SK-N-SH (cell line): ENCODE measurements at regions of chr16 and their contacts with region 1.

Region 1: DNA sequence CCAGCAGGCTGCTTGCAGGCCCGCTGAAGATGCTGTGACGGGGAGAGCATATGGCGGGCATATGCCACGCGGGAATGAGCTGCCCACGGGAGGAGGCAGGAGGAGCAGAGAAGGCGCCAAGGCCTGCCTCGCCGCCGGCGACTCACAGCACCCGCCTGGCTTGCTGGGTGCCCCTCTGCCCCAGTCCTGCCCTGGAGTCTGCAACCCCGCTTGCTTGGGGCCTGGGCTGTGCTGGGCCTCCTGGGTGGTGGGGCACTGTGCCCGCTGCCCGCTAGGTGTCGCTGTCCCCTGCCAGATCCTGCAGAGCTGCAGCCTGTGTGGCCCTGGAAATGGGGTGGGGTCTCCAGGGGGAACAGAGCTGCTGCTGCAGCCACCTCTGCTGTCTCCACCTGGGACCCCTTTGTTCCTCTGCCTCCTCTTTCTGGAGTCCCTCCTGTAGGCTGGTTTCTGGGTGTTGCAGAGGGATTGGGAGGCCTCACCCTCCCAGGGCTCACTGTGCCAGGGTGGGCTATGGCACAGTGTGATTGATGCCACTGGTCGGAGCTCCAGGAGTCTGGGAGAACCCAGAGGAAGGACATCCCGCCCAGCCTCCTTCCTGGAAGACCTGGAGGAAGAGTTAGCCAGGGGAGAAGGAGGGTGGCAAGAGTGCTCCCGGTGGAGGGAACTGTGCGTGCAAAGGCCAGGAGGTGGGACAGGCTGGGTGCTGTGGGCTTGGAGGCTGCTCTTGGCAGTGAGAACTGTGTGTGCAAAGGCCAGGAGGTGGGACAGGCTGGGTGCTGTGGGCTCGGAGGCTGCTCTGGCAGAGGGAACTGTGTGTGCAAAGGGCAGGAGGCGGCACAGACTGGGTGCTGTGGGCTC is 141.0 kb upstream of the CIBAR2 start:
- DNase-seq: peak; percentile 93
- H3K4me3 ChIP-seq: no peak overlapping the region; a peak in 1 of 4 replicates
- H3K27ac ChIP-seq: peak overlapping the region in 1 of 2 experiments; percentile 60; a peak in 2 of 4 replicates
- H3K4me1 ChIP-seq: peaks cover 0 to 55% of the 10 kb centered on the region in 2 experiments; a peak in 1 of 4 replicates
- H3K27me3 ChIP-seq: no peaks in the 10 kb centered on the region
- CTCF ChIP-seq: peak; percentile 94
- EP300 ChIP-seq: no peak
- RAD21 ChIP-seq: peak; percentile 77

Region 2: GRCh38 chr16:85151603-85152413 is 101.5 kb before region 1 on chr16:
- CTCF ChIA-PET with region 1: interaction called, 10 read pairs
- POLR2A ChIA-PET with region 1: no interaction called
- DNase-seq: peak; percentile 93
- H3K4me3 ChIP-seq: no peak overlapping the region
- H3K27ac ChIP-seq: peak overlapping the region; percentile 57 to 89
- H3K4me1 ChIP-seq: peaks cover 6 to 54% of the 10 kb centered on the region in 2 experiments
- H3K27me3 ChIP-seq: no peaks in the 10 kb centered on the region
- CTCF ChIP-seq: no peak
- EP300 ChIP-seq: peak; percentile 56 to 83; a peak in 3 of 4 replicates
- RAD21 ChIP-seq: peak; percentile 25; the same call in 1 of the 2 replicates

Region 3: GRCh38 chr16:85202631-85203461 is 50.5 kb before region 1 on chr16:
- CTCF ChIA-PET with region 1: interaction called, 13 read pairs
- POLR2A ChIA-PET with region 1: no interaction called
- DNase-seq: peak; percentile 95
- H3K4me3 ChIP-seq: no peak overlapping the region
- H3K27ac ChIP-seq: peak overlapping the region; percentile 60 to 95; a peak in 3 of 4 replicates
- H3K4me1 ChIP-seq: peaks cover 14 to 62% of the 10 kb centered on the region in 2 experiments; a peak in 3 of 4 replicates
- H3K27me3 ChIP-seq: no peaks in the 10 kb centered on the region
- CTCF ChIP-seq: no peak
- EP300 ChIP-seq: peak in 1 of 2 experiments; percentile 73; a peak in 3 of 4 replicates
- RAD21 ChIP-seq: peak; percentile 8; the same call in 1 of the 2 replicates

Region 4: DNA sequence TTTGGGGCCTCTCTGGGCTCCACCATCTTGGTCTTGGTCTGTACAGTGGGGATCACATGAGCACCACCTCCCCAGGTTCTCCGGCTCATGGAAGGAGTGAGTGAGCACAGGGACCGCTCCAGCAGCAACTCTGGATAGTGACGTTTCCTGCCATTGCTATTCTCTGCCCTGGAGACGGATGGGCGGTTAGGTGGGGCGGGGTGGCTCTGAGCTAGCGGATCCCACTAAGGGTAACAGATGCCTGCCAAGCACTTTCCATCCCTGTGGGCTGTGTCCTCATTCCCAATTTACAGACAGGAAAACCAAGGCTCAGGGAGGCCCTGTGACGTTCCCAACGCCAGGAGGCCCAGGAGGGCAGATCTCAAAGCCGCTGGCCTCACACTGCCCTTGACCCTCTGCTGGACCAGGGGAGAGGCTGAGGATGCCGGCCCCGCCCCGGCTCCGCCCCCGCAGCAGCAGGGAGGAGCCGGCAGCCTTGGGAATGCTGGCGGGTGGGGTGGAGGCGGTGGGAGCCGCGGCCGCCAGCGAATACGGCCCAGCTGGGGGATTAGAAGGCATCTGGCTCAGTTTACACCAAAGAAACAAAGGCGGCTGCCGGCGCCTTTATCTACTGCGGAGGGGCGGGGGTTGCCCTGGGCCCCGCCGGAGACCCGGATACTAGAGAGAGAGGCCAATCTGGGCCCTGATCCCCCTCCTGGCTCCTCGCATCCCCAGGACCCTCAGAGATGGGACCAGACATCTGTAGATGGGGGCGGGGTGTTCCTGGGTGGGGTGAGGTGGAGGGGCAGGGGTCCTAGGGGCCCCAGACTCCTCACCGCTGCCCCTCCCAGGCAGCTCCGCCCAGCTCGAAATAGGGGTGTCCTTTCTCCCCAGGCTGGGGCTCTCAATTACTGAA is 18.8 kb before region 1 on chr16:
- CTCF ChIA-PET with region 1: interaction called, 26 read pairs
- POLR2A ChIA-PET with region 1: no interaction called
- DNase-seq: peak; percentile 96
- H3K4me3 ChIP-seq: peak overlapping the region; percentile 44 to 61
- H3K27ac ChIP-seq: peak overlapping the region; percentile 60 to 90; a peak in 3 of 4 replicates
- H3K4me1 ChIP-seq: peaks cover 21 to 45% of the 10 kb centered on the region in 2 experiments; a peak in 3 of 4 replicates
- H3K27me3 ChIP-seq: no peaks in the 10 kb centered on the region
- CTCF ChIP-seq: no peak
- EP300 ChIP-seq: peak in 1 of 2 experiments; percentile 9; a peak in 1 of 4 replicates
- RAD21 ChIP-seq: no peak; the same call in 1 of the 2 replicates

Region 5: DNA sequence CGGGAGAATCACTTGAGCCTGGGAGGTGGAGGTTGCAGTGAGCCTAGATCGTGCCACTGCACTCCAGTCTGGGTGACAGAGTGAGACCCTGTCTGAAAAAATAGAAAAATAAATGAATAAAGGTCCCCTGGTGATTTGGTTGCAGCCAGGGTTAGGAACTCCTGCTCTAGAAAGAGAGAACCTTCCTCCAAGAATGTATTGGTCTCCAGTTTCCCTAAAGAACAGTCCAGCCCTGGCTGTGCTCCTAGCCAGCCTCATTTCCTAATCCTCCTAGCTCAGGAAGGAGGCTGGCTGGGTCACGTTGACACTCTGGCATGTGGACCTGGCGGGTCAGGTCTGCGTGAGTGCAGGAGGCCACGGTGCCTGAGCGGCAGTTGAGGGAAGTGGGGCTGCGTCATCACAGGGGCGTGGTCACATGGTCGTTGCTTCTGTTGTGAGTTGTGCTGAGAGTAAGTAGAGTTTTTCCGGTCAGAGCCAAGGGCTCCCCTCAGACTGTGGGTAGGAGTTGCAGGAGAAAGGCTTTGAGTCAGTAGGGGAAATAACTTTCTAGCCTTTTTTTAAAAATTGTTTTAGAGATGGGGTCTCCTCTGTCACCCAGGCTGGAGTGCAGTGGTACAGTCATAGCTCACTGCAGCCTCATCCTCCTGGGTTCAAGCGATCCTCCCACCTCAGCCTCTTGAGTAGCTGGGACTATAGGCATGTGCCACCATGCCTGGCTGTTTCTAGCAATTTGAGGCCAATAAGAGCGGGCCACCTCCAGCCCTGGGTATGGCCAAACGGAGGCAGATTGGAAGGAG is 52.9 kb after region 1 on chr16:
- CTCF ChIA-PET with region 1: interaction called, 13 read pairs
- POLR2A ChIA-PET with region 1: no interaction called
- DNase-seq: no peak
- H3K4me3 ChIP-seq: no peak overlapping the region
- H3K27ac ChIP-seq: no peak overlapping the region
- H3K4me1 ChIP-seq: peaks cover 0 to 36% of the 10 kb centered on the region in 2 experiments; a peak in 1 of 4 replicates
- H3K27me3 ChIP-seq: no peaks in the 10 kb centered on the region
- CTCF ChIP-seq: no peak
- EP300 ChIP-seq: no peak
- RAD21 ChIP-seq: no peak

Region 6: DNA sequence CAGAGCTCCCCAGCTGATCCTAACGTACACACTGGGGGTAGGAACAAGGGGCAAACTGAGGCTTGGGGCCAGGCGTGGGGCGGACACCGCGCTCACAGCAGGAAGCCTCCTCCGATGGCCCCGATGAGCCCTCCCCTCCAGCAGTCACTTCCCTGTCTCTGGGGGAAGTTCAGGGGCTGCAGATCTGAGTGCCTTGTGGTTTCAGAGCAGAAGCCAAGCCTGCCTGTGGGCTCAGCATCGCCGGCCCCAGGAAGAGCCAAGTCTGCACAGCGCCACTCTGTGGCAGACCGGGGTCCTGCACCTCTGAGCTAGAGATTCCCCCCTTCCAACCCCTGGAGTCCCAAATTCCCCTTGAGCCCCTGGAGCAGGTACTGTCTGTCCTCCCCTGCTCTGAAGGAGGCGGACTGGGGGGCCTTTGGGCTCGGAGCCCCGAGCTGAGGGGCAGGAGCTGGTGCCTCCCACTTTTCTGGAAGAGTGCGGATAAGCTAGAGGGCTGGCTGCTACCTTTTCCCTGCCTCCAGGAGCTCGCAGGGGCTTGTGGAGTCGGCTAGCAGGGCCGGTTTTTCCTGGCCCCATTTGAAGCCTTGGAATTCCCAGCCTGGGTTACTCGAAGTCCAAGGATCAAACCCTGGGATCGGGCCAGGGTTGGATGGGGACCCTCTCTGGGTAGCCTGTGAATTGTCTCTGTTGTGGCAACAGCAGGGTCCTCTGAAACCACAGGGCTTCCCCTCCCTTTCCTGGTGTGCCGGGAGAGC is 362.7 kb after region 1 on chr16:
- CTCF ChIA-PET with region 1: interaction called, 10 read pairs
- POLR2A ChIA-PET with region 1: no interaction called
- DNase-seq: peak; percentile 86
- H3K4me3 ChIP-seq: peak overlapping the region; percentile 42 to 86; a peak in 2 of 4 replicates
- H3K27ac ChIP-seq: peak overlapping the region in 1 of 2 experiments; percentile 97; a peak in 2 of 4 replicates
- H3K4me1 ChIP-seq: peaks cover 9 to 64% of the 10 kb centered on the region in 2 experiments
- H3K27me3 ChIP-seq: no peaks in the 10 kb centered on the region
- CTCF ChIP-seq: peak; percentile 91
- EP300 ChIP-seq: no peak
- RAD21 ChIP-seq: peak; percentile 65